Heart left ventricle (tissue), 16 donors: ENCODE measurements at regions of chr2 and their contacts with region 1.

Region 1: GRCh38 chr2:201118121-201118960 is 2.4 kb downstream of the CFLAR start:
- DNase-seq: peak; percentile 91 to 95 (median 92)
- ATAC-seq: peak; percentile 44 to 75 (median 52)
- H3K4me3 ChIP-seq: peak overlapping the region; percentile 65 to 99 (median 85)
- H3K27ac ChIP-seq: peak overlapping the region; percentile 94 to 100 (median 100)
- H3K4me1 ChIP-seq: peaks cover 0 to 55% (median 30%) of the 10 kb centered on the region in 12 donors
- H3K27me3 ChIP-seq: no peaks in the 10 kb centered on the region
- CTCF ChIP-seq: peak; percentile 19 to 65 (median 51)
- POLR2A ChIP-seq: peak in 1 of 2 donors; percentile 71

Region 2: DNA sequence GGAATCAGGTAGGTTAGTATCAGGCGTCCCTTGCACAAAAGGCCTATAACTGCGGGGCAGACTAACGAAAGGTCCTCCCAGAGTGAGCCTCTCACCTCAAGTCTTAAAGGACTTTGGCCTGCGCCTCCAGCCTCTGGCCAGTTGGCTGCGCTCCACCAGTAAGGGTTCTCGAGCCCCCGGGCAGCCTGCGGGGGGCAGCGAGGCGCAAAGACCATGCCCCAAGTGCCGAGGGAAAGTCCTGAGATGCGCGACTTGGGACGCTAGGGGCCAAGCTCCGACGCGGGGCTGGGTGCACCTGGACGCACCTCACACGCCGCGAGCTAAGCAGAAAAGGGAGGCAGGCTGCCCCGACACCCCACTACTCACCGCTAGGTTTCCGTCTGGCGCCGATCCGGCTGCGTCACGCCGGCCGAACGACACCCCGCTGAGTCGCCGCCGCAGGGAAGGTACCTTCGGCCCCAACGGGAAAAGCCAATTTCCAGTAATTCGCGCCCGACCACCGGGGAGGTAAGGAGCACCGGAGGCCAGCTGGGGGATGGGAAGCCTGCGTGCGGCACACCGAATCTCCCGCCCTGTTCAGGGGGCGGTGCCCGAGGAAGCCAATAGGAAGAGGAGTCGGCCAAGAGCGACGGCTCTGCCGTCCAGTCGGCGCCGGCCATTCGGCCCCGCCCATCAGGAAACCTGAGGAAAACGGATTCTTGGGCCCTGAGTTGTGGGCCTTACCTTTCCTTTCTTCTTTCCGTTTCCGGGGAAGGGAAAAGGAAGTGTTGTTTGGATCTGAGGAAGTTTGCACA is 155.0 kb before region 1 on chr2 and contains the start of gene ORC2:
- intact Hi-C with region 1: loop called in 2 of 10 experiments (anchors 1 kb)
- DNase-seq: peak; percentile 94 to 97 (median 95)
- ATAC-seq: peak; percentile 98 to 99 (median 99)
- H3K4me3 ChIP-seq: peak within 1 kb of the TSS; percentile 69 to 97 (median 88)
- H3K27ac ChIP-seq: peak within 1 kb of the TSS; percentile 83 to 97 (median 92)
- H3K4me1 ChIP-seq: peaks cover 0 to 53% (median 35%) of the 10 kb centered on the region in 12 donors
- H3K27me3 ChIP-seq: no peaks in the 10 kb centered on the region
- CTCF ChIP-seq: peak; percentile 24 to 61 (median 50)
- POLR2A ChIP-seq: peak in 1 of 2 donors; percentile 51
- total RNA-seq, gene ORC2: 6.7 to 38.0 (median 24.0) TPM

Region 3: DNA sequence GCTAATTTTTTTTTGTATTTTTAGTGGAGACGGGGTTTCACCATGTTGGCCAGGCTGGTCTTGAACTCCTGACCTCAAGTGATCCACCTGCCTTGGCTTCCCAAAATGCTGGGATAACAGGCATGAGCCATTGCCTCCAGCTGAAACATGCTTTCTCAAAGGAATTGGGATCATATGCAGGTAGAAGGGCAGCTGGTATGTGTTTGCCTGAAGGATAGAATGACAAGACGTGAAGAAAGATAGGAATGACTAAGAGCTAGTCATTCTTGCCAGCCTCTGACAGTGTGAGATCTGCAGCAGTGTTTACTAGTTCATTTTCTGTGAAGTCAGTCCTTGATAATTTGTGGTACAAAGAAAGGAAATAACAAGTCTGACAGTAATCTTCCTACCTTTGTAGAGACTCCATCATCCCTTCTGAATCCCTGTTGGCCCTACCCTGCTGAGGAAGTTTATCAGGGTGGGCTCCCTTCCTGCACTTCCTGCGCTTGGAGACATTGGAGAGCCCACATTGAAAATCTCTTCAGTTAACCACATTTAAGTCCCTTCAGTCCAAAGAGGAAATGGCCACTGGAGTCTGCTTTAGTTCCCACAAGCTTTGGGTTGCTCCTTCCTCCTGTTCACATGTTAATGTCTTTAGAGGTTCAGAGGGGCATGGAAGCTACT is 12.3 kb after region 1 on chr2:
- intact Hi-C with region 1: loop called in 3 of 10 experiments (anchors 2 kb)
- DNase-seq: peak in 2 of 5 donors; percentile 56 to 59
- ATAC-seq: peak in 3 of 4 donors; percentile 39 to 68 (median 67)
- H3K4me3 ChIP-seq: peak overlapping the region in 7 of 12 donors; percentile 12 to 42 (median 28)
- H3K27ac ChIP-seq: peak overlapping the region; percentile 94 to 100 (median 99)
- H3K4me1 ChIP-seq: peaks cover 25 to 100% (median 96%) of the 10 kb centered on the region in 12 donors
- H3K27me3 ChIP-seq: no peaks in the 10 kb centered on the region
- CTCF ChIP-seq: no peak
- POLR2A ChIP-seq: no peak

Region 4: DNA sequence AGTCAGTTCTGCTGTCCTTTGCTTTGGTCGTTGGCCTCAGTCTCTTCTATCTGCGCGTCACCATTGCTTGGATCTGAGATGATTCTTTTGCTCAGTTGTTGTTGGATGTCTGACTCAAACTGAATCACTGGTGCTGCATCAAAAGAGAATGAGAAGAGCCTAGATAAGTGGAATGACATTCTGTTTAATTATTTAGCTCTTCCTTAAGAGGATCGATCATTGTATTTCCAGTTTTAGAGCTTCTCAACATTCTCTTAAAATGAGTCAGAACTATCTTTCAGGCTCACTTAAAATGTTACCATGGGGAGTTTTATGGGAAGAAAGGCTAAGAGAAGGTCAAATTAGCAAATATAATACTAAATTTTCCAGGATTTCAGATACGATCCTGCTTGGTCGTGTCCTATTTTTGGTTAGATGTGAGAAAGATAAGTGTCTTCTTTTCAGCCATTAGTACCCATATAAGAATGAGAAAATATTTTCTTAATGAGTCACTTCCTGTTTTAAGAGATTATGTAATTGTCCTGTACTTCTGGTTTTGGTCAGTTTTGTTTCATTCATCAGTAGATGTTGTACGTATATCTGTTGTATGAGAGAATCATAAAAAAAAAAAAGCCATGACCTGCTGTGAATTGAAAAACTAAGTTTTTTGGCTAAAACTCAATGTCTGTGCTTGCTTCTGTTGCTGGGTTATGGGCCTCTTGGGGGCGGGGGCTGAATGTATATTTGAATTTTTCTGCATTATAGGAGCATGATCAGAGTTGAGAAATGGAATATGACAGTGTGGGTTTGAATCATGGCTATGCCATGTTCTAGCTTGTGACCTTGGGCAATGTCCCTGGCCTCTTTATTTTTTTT is 33.0 kb after region 1 on chr2:
- intact Hi-C with region 1: loop called in 4 of 10 experiments (anchors 5 kb)
- DNase-seq: no peak
- ATAC-seq: peak in 3 of 4 donors; percentile 20 to 58 (median 49)
- H3K4me3 ChIP-seq: peak overlapping the region in 1 of 12 donors; percentile 13
- H3K27ac ChIP-seq: peak overlapping the region; percentile 9 to 89 (median 74)
- H3K4me1 ChIP-seq: peaks cover 5 to 88% (median 39%) of the 10 kb centered on the region in 12 donors
- H3K27me3 ChIP-seq: no peaks in the 10 kb centered on the region
- CTCF ChIP-seq: no peak
- POLR2A ChIP-seq: no peak

Region 5: GRCh38 chr2:201158111-201158929 is 40.0 kb after region 1 on chr2:
- intact Hi-C with region 1: loop called (anchors 2 to 5 kb)
- DNase-seq: peak in 4 of 5 donors; percentile 62 to 73 (median 70)
- ATAC-seq: peak; percentile 69 to 92 (median 82)
- H3K4me3 ChIP-seq: no peak overlapping the region
- H3K27ac ChIP-seq: peak overlapping the region in 11 of 12 donors; percentile 20 to 89 (median 66)
- H3K4me1 ChIP-seq: peaks cover 2 to 62% (median 23%) of the 10 kb centered on the region in 12 donors
- H3K27me3 ChIP-seq: no peaks in the 10 kb centered on the region
- CTCF ChIP-seq: peak; percentile 48 to 79 (median 62)
- POLR2A ChIP-seq: peak in 1 of 2 donors; percentile 13

Region 6: DNA sequence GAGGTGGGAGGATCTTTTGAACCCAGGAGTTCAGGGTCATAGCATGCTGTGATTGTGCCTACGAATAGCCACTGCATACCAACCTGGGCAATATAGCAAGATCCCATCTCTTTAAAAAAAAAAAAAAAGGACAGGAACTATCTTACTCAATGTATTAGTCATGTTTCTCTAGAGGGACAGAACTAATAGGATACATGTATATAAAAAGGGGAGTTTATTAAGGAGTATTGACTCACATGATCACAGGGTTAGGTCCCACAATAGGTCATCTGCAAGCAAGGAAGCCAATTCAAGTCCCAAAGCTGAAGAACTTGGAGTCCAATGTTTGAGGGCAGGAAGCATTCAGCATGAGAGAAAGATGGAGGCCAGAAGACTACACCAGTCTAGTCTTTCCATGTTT is 45.8 kb after region 1 on chr2:
- intact Hi-C with region 1: loop called in 8 of 10 experiments (anchors 2 to 5 kb)
- DNase-seq: no peak
- ATAC-seq: no peak
- H3K4me3 ChIP-seq: no peak overlapping the region
- H3K27ac ChIP-seq: no peak overlapping the region
- H3K4me1 ChIP-seq: peaks cover 0 to 18% (median under 1%) of the 10 kb centered on the region in 12 donors
- H3K27me3 ChIP-seq: no peaks in the 10 kb centered on the region
- CTCF ChIP-seq: no peak
- POLR2A ChIP-seq: no peak